ENCODE measurements at regions of chr18 and their contacts with region 1.

Region 1: DNA sequence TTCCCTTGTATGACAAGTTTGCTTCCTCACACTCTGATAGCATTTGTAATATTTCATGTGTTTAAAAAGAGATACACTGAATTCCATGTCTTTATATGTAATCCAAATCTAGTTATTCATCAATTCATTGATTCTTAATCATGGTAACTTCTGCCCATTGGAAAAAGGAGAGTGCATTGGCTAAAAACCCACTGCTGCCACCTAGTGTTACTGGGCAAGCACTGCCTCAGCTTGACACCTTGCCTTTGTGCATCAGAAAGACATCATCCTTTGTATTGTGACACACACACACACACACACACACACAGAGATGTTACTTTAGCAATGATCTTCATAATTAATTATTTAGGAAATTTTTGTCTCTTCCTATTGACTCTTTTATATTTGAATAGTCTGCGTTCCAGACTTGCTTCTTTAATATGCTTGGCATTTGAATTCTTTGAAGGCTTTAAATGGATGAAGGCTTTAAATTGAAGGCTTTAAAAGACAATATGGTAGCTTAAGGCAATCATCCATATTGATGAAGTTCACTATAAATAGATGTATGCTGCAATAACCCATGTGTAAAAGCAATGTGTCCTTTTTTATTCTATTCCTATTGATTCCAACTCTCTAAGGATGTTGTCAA is 414.2 kb upstream of the CHST9 start:
- H3K4me3 Mint-ChIP-seq: no peak overlapping the region
- H3K27ac Mint-ChIP-seq: no peak overlapping the region
- H3K4me1 Mint-ChIP-seq: no peaks in the 10 kb centered on the region
- H3K27me3 Mint-ChIP-seq: no peaks in the 10 kb centered on the region

Region 2: GRCh38 chr18:26804519-26804918 is 794.8 kb before region 1 on chr18:
- intact Hi-C with region 1: loop called (anchors 5 kb)
- H3K4me3 Mint-ChIP-seq: no peak overlapping the region
- H3K27ac Mint-ChIP-seq: no peak overlapping the region
- H3K4me1 Mint-ChIP-seq: peaks cover 16% of the 10 kb centered on the region
- H3K27me3 Mint-ChIP-seq: no peaks in the 10 kb centered on the region

Region 3: DNA sequence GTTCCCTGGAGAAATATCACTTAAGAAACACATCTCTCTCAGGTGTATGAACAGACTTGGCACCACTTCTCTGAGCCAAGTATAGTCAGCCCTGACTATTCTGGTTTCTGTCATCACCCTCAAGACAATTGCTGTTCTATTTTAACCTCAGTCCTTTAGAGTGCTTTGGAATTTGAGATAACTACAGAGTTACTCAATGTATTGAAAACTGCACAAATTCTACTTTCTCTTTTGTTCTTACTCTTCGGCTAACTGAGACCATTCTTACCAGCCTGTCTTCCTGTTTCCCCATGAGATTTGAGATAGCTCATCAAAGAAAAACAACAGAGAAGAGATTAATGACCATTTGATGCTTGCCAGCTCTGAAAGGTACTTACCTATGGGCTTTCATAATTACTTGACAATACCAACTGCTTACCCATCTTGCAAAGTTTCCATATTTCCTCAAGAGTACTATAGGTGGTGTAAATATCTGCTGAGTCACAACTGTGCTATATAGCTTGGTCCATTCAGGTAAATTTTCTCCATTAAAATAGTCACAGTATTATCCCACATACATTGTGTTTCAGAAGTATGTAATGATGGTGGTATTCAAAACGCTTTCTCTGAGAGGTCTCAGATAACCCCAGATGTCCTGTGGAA is 53.3 kb after region 1 on chr18:
- intact Hi-C with region 1: loop called (anchors 10 kb)
- H3K4me3 Mint-ChIP-seq: no peak overlapping the region
- H3K27ac Mint-ChIP-seq: no peak overlapping the region
- H3K4me1 Mint-ChIP-seq: no peaks in the 10 kb centered on the region
- H3K27me3 Mint-ChIP-seq: no peaks in the 10 kb centered on the region

Region 4: DNA sequence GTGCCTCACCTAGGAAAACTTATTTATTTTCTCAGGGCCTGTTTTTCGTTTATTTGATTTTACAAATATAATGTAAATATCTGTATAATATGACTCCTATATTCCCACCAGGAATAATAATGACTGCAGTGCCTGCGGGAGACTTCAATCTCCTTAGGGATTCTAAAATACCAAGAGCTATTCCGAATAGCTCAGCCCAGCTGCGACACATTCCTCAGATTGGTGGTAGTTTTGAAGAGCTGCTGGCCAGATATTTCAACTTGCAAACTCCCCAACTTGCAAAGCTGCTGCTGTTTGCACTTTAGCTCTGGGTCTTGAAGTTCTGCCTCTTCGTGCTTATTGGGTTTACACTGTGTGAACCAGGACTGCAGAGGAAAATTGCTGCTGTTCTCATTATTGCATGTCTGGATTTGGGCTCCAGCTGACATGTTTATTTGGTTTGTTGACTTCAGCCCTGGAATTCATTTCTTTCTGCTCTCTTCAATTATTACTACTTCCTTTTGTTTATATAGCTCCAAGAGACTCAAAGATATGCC is 66.0 kb after region 1 on chr18:
- intact Hi-C with region 1: no loop called
- H3K4me3 Mint-ChIP-seq: no peak overlapping the region
- H3K27ac Mint-ChIP-seq: no peak overlapping the region
- H3K4me1 Mint-ChIP-seq: no peaks in the 10 kb centered on the region
- H3K27me3 Mint-ChIP-seq: no peaks in the 10 kb centered on the region

Measured in dendritic cell treated with granulocyte-macrophage colony-stimulating factor and Interleukin-4, amounts not matched to agents 40 ng/mL and 50 ng/mL, for 4 days (primary cell).